Heart right ventricle (tissue), 16 donors: ENCODE measurements at regions of chr4 and their contacts with region 1.

Region 1: DNA sequence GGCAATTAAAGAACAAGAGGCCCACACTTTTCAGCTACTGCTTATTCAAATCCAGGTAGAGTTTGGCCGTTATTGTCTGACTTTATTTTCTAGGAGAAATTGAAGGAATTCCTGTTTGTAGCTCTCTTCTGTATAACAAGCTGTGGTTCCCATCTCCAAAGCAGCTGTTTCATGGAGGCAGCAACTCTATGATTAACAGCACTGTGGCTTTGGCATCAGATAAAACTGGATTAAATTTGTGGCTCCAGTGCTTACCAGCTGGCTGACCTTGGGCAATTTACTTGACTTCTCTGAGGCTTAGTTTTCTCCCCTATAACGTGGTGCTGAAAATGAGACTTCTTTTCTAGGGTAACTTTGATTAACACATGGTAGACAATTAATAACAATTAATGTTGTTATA is 28.1 kb downstream of the SLC30A9 start:
- DNase-seq: no peak
- ATAC-seq: no peak
- H3K4me3 ChIP-seq: no peak overlapping the region
- H3K27ac ChIP-seq: no peak overlapping the region
- H3K4me1 ChIP-seq: no peaks in the 10 kb centered on the region
- H3K27me3 ChIP-seq: no peaks in the 10 kb centered on the region
- CTCF ChIP-seq: no peak

Region 2: GRCh38 chr4:42050516-42051249 is 32.2 kb after region 1 on chr4:
- intact Hi-C with region 1: loop called in 1 of 10 experiments (anchors 5 kb)
- DNase-seq: no peak
- ATAC-seq: no peak
- H3K4me3 ChIP-seq: no peak overlapping the region
- H3K27ac ChIP-seq: no peak overlapping the region
- H3K4me1 ChIP-seq: no peaks in the 10 kb centered on the region
- H3K27me3 ChIP-seq: no peaks in the 10 kb centered on the region
- CTCF ChIP-seq: no peak